HCT116 (cell line): ENCODE measurements at regions of chr12 and their contacts with region 1.

Region 1: DNA sequence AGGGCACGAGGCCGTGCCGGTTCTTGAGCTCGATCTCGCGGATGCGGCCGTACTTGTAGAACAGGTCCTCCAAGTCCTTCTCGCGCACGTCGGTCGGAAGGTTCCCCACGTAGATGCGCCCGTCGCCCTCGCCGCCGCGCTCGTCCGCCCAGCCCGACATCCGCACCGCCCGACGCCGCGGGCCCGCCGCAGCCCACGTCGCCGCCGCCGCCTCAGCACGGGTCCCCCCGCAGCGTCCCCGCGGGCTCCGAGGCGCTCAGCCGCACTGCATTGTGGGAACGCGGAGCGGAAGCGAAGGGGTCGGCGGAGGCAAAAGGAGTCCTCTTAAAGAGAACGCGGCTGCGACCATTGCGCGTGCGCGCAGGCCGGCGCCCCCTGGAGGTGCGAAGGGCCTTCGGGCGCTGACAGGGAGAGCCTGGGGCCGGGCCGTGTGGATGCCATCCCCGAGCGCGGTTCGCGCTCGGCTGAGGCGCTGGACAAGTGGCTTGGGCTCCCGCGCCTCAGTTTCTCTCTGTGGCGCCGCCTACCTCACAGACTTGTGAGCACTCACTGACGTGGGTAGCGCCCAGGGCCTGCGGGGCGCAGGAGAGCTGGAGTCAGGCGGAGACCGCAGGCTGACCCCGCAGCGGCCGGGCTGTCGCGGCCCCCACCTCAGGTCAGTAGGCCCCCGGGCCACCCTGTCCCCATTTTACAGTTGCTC is at the start of gene SRSF9:
- DNase-seq: peak; percentile 95
- ATAC-seq: peak; percentile 85
- H3K4me3 ChIP-seq: peak within 1 kb of the TSS; percentile 80 to 89
- H3K27ac ChIP-seq: peak within 1 kb of the TSS; percentile 97
- H3K4me1 ChIP-seq: peaks cover 31 to 60% of the 10 kb centered on the region in 2 experiments
- H3K27me3 ChIP-seq: no peaks in the 10 kb centered on the region
- CTCF ChIP-seq: peak in 2 of 3 experiments; percentile 71 to 90; a peak in 4 of 6 replicates
- POLR2A ChIP-seq: peak; percentile 47
- RAD21 ChIP-seq: no peak
- total RNA-seq, gene SRSF9: 297 TPM

Region 2: DNA sequence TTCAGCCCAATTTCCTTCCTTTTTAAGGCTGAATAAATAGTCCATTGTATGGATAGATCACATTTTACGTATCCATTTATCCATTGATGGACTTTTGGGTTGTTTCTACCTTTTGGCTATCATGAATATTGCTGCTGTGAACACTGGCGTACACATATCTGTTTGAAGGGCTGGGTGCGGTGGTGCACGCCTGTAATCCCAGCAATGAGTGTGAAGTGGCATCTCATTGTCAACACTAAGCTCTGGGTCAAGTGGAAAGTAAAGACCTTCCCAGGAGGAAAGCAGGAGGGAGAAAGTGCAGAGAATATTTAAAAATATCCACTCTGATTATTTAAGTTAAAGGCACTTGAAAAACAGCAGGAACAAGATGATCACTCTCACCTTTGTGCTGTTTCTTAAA is 130.3 kb before region 1 on chr12:
- CTCF ChIA-PET with region 1: interaction called, 3 read pairs
- POLR2A ChIA-PET with region 1: no interaction called
- RAD21 ChIA-PET with region 1: interaction called in 1 of 2 experiments, 3 read pairs
- intact Hi-C with region 1: loop called (anchors 5 kb)
- DNase-seq: no peak
- ATAC-seq: no peak
- H3K4me3 ChIP-seq: no peak overlapping the region
- H3K27ac ChIP-seq: no peak overlapping the region
- H3K4me1 ChIP-seq: no peaks in the 10 kb centered on the region
- H3K27me3 ChIP-seq: no peaks in the 10 kb centered on the region
- CTCF ChIP-seq: no peak
- POLR2A ChIP-seq: no peak
- RAD21 ChIP-seq: no peak

Region 3: GRCh38 chr12:120356567-120357030 is 113.0 kb before region 1 on chr12:
- CTCF ChIA-PET with region 1: interaction called, 4 read pairs
- POLR2A ChIA-PET with region 1: no interaction called
- RAD21 ChIA-PET with region 1: no interaction called
- intact Hi-C with region 1: loop called (anchors 1 kb)
- DNase-seq: peak; percentile 57
- ATAC-seq: peak; percentile 96
- H3K4me3 ChIP-seq: no peak overlapping the region
- H3K27ac ChIP-seq: no peak overlapping the region
- H3K4me1 ChIP-seq: peaks cover 0 to 14% of the 10 kb centered on the region in 2 experiments; a peak in 2 of 4 replicates
- H3K27me3 ChIP-seq: no peaks in the 10 kb centered on the region
- CTCF ChIP-seq: peak; percentile 79 to 91 (median 87)
- POLR2A ChIP-seq: no peak
- RAD21 ChIP-seq: peak; percentile 89

Region 4: GRCh38 chr12:120388691-120389481 is 80.7 kb before region 1 on chr12:
- CTCF ChIA-PET with region 1: no interaction called
- POLR2A ChIA-PET with region 1: no interaction called
- RAD21 ChIA-PET with region 1: no interaction called
- intact Hi-C with region 1: no loop called
- DNase-seq: no peak
- ATAC-seq: no peak
- H3K4me3 ChIP-seq: no peak overlapping the region
- H3K27ac ChIP-seq: no peak overlapping the region
- H3K4me1 ChIP-seq: no peaks in the 10 kb centered on the region
- H3K27me3 ChIP-seq: no peaks in the 10 kb centered on the region
- CTCF ChIP-seq: no peak
- POLR2A ChIP-seq: no peak
- RAD21 ChIP-seq: no peak

Region 5: DNA sequence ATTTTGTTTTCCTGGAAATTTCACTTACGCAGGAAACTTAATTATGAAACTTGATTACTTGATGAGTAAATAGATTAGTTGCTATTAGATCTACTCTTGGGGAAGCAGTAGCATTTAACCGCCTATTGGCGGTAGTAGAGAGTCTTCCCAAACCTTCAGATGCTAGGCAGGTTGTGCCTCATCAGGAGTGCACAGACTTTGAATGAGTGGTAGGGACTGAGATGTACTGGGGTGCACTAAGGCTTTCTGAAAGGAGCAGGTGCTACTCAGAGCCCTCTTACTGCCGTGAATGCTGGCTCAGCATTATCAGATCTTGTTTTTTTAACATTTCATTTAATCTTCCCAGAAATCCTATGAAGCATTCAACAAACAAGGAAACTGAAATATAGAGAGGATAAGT is 15.6 kb before region 1 on chr12:
- CTCF ChIA-PET with region 1: interaction called, 25 read pairs
- POLR2A ChIA-PET with region 1: interaction called, 4 read pairs
- RAD21 ChIA-PET with region 1: no interaction called
- intact Hi-C with region 1: no loop called
- DNase-seq: no peak
- ATAC-seq: peak; percentile 88
- H3K4me3 ChIP-seq: no peak overlapping the region
- H3K27ac ChIP-seq: no peak overlapping the region
- H3K4me1 ChIP-seq: no peaks in the 10 kb centered on the region
- H3K27me3 ChIP-seq: no peaks in the 10 kb centered on the region
- CTCF ChIP-seq: peak; percentile 30 to 83 (median 82); a peak in 5 of 6 replicates
- POLR2A ChIP-seq: no peak
- RAD21 ChIP-seq: peak; percentile 52

Region 6: GRCh38 chr12:120495723-120496412 is 26.3 kb after region 1 on chr12 and contains the start of gene DYNLL1:
- CTCF ChIA-PET with region 1: interaction called, 3 read pairs
- POLR2A ChIA-PET with region 1: interaction called, 18 read pairs
- RAD21 ChIA-PET with region 1: no interaction called
- intact Hi-C with region 1: loop called (anchors 1 kb)
- DNase-seq: peak; percentile 91
- ATAC-seq: peak; percentile 94
- H3K4me3 ChIP-seq: peak within 1 kb of the TSS; percentile 93
- H3K27ac ChIP-seq: peak within 1 kb of the TSS; percentile 92
- H3K4me1 ChIP-seq: peaks cover 9 to 16% of the 10 kb centered on the region in 2 experiments; a peak in 2 of 4 replicates
- H3K27me3 ChIP-seq: no peaks in the 10 kb centered on the region
- CTCF ChIP-seq: no peak
- POLR2A ChIP-seq: peak; percentile 89
- RAD21 ChIP-seq: no peak
- total RNA-seq, gene DYNLL1: 243 TPM

Region 7: GRCh38 chr12:120750806-120751205 is 281.2 kb after region 1 on chr12:
- CTCF ChIA-PET with region 1: no interaction called
- POLR2A ChIA-PET with region 1: no interaction called
- RAD21 ChIA-PET with region 1: no interaction called
- intact Hi-C with region 1: no loop called
- DNase-seq: no peak
- ATAC-seq: peak; percentile 32; the same call in 1 of the 2 replicates
- H3K4me3 ChIP-seq: no peak overlapping the region
- H3K27ac ChIP-seq: no peak overlapping the region
- H3K4me1 ChIP-seq: peaks cover 3 to 11% of the 10 kb centered on the region in 2 experiments; a peak in 3 of 4 replicates
- H3K27me3 ChIP-seq: no peaks in the 10 kb centered on the region
- CTCF ChIP-seq: peak; percentile 20 to 47 (median 26); a peak in 3 of 6 replicates
- POLR2A ChIP-seq: no peak
- RAD21 ChIP-seq: peak; percentile 53